Esophagus muscularis mucosa (tissue), 4 donors: ENCODE measurements at regions of chr6 and their contacts with region 1.

Region 1: DNA sequence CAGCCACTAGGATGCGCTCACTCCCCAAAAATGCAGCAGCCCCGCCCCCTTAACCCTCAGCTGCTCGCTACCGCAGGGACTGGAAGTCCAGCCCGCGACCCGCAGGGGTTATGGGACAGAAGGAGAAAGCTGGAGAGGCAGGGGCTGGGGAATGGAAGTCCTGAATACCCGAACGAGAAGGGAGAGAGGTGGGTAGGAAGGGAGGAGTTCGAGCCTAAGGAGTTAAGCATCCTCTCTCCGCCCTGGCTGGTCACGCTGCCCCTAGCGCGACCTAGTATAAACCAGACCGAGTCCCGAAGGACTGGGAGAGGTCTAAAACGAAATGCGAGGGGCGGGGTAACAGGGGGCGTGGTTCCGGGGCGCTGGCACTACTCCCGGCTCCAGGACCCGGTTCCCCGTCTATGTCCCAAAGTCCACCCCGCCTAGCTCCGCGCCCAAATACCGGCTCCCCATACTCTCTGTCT is 448 bp upstream of the DDAH2 start:
- DNase-seq: peak; percentile 97
- H3K4me3 ChIP-seq: peak overlapping the region; percentile 69 to 98 (median 94)
- H3K27ac ChIP-seq: peak overlapping the region; percentile 93 to 99 (median 97)
- H3K4me1 ChIP-seq: peaks cover 36 to 59% (median 55%) of the 10 kb centered on the region in 4 donors
- H3K27me3 ChIP-seq: no peaks in the 10 kb centered on the region
- CTCF ChIP-seq: peak in 2 of 3 experiments; percentile 9 to 83
- EP300 ChIP-seq: no peak
- POLR2A ChIP-seq: no peak

Region 2: GRCh38 chr6:31502586-31502985 is 227.0 kb before region 1 on chr6:
- intact Hi-C with region 1: no loop called
- DNase-seq: no peak
- H3K4me3 ChIP-seq: no peak overlapping the region
- H3K27ac ChIP-seq: no peak overlapping the region
- H3K4me1 ChIP-seq: peaks cover 3 to 15% (median 14%) of the 10 kb centered on the region in 4 donors
- H3K27me3 ChIP-seq: peaks cover 0 to 67% (median 2%) of the 10 kb centered on the region in 4 donors
- CTCF ChIP-seq: no peak
- EP300 ChIP-seq: no peak
- POLR2A ChIP-seq: no peak

Region 3: GRCh38 chr6:31769684-31770371 is 40.3 kb after region 1 on chr6:
- intact Hi-C with region 1: loop called (anchors 5 kb)
- DNase-seq: no peak
- H3K4me3 ChIP-seq: no peak overlapping the region
- H3K27ac ChIP-seq: no peak overlapping the region
- H3K4me1 ChIP-seq: peaks cover 0 to 25% (median 16%) of the 10 kb centered on the region in 4 donors
- H3K27me3 ChIP-seq: peaks cover 0 to 3% (median 0%) of the 10 kb centered on the region in 4 donors
- CTCF ChIP-seq: peak; percentile 74 to 93 (median 86)
- EP300 ChIP-seq: no peak
- POLR2A ChIP-seq: no peak